ENCODE measurements at regions of chr3 and their contacts with region 1.

Region 1: DNA sequence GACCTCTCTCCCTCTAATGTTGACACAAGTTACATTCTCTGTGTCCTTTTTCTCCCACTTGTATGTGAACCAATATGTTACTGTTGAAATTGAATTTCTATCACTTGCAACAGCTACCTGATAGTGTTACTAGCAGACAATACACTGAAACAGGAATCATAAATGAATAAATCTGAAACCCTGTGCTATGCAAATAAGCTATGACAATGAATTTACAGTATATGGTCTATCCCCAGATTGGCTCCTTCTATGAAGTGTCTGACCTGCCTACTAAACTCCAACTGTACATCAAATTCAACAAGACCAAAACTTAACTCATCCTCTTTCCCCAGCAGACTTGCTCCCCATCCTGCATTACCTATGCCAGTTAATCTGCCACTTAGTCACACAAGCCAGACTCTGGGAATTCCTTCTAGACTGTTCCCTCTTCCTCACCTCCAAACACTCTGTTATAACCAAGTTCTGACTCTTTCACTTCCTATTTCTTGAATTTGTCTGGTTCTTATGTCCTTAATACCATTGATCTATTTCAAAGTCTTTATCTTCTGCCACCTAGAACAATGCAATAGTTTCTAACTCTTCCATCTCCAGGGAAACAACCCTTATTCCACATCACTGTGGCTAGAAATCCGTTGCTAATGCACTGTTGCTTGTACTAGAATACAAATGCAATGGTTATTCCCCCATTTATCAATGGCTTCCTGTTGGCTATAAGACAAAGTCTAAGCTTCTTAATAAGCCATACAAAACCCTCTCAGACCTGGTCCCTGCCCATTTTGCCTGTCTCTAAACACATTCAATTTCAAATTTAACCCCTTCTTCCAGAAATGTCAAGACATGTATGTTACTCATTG is 13.4 kb upstream of the ZNF639 start:
- DNase-seq: no peak
- H3K4me3 ChIP-seq: no peak overlapping the region
- H3K27ac ChIP-seq: no peak overlapping the region
- H3K4me1 ChIP-seq: no peaks in the 10 kb centered on the region
- H3K27me3 ChIP-seq: no peaks in the 10 kb centered on the region
- CTCF ChIP-seq: no peak
- POLR2A ChIP-seq: no peak

Region 2: DNA sequence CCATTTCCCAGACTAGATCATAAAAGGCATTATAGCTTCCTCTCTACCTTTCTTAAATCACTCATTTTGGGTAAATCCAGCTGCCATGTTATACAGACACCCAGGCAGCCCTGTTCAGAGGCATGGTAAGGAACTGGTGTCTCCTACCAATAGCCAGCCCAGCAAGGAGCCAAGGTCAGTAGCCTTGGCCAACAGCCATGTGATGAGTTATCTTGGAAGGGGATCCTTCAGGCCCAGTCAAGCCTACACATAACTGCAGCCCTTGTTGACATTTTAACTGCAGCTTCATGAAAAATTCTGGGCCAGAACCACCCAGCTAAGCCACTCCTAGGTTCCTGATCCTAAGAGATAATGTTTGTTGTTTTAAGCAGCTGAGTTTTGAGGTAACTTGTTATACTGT is 208.8 kb before region 1 on chr3:
- intact Hi-C with region 1: loop called (anchors 10 kb)
- DNase-seq: no peak
- H3K4me3 ChIP-seq: no peak overlapping the region
- H3K27ac ChIP-seq: no peak overlapping the region
- H3K4me1 ChIP-seq: no peaks in the 10 kb centered on the region
- H3K27me3 ChIP-seq: no peaks in the 10 kb centered on the region
- CTCF ChIP-seq: no peak
- POLR2A ChIP-seq: no peak

Region 3: DNA sequence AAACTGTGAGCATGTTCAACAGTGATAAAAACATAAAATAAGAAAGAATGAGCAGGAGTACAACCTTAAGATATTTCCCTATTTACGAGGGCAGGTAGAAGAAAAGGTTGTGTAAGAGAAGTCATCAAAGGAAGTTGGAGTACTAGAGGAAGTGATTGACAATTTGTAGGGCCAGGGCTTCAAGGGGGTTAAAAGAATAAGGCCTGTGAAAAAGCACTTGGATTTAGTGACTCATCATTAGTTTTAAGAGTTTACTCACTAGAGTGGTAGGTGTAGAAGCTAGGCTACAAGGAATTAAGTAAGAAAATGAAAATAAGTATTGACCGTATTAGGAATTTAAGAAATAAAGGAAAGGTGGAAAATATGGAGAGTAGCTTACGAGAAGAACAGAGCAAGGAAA is 82.1 kb before region 1 on chr3:
- intact Hi-C with region 1: no loop called
- DNase-seq: no peak
- H3K4me3 ChIP-seq: no peak overlapping the region
- H3K27ac ChIP-seq: no peak overlapping the region
- H3K4me1 ChIP-seq: no peaks in the 10 kb centered on the region
- H3K27me3 ChIP-seq: no peaks in the 10 kb centered on the region
- CTCF ChIP-seq: no peak
- POLR2A ChIP-seq: no peak

Region 4: DNA sequence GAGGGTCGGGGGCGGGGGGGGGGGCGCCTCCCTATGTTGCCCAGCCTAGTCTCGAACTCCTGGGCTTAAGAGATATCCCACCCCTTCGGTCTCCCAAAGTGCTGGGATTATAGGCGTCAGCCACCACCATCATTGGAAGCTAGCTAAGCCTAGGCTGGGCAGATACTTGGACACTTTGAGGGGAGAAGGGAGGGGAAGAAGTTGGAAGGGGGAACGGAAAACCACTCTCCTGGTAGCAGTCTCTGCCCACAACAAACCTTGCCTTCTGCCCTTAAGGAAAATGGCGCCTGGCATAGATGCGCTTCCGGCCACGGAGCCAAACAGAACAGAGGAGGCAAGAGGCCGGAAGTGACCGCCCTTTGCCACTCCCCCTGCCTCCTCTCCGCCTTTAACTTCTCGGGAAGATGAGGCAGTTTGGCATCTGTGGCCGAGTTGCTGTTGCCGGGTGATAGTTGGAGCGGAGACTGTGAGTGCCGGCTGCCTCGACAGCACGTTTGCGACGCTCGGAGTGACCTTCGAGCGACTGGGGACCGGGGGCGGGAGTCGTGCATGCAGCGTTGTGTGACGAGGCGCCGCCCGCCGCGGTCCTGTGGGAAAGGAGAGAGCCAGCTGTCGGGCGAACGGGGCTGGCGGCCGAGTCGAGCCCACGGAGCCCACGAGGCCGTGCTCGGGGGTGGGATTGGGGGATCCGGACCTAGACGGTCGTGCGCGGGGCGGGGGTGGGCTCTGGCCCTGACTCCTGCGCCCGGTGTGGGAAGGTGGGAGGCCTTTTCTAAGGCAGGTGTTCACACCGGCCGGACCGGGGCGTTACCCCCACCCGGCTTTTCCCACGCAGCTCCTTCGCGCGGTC is 38.1 kb after region 1 on chr3 and contains the start of gene MFN1:
- intact Hi-C with region 1: no loop called
- DNase-seq: peak; percentile 97
- H3K4me3 ChIP-seq: peak within 1 kb of the TSS; percentile 72 to 87 (median 79)
- H3K27ac ChIP-seq: peak within 1 kb of the TSS; percentile 69 to 84 (median 84)
- H3K4me1 ChIP-seq: peaks cover 4 to 9% of the 10 kb centered on the region in 2 donors
- H3K27me3 ChIP-seq: no peaks in the 10 kb centered on the region
- CTCF ChIP-seq: no peak
- POLR2A ChIP-seq: peak; percentile 39 to 93
- total RNA-seq, gene MFN1: 43.3 to 45.7 (median 44.6) TPM

Region 5: DNA sequence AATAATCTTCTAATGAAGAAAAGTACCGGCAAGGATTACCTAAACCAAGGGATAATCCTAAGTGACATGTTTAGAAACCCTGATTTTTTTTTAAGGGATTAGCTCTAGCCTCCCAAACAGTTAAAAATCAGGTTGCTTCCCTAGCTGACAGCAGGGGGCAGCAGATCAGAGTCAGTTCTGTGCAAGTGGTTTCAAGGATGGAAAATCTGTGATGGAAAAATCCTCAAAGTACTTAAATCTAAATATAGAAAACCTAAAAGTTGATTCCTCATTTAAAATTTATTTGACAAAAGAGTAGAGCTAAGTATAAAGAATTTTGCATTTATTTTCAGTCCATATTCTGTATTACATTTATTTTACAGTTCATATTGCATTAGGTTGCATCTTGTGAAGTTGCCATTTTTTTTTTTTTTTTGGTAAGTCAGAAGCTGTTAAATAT is 619.7 kb after region 1 on chr3:
- intact Hi-C with region 1: no loop called
- DNase-seq: peak; percentile 34 to 42
- H3K4me3 ChIP-seq: no peak overlapping the region
- H3K27ac ChIP-seq: no peak overlapping the region
- H3K4me1 ChIP-seq: no peaks in the 10 kb centered on the region
- H3K27me3 ChIP-seq: no peaks in the 10 kb centered on the region
- CTCF ChIP-seq: peak; percentile 17 to 76 (median 41)
- POLR2A ChIP-seq: no peak

Measured in thyroid gland (tissue), 4 donors.